ENCODE measurements at regions of chr2 and their contacts with region 1.

Region 1: DNA sequence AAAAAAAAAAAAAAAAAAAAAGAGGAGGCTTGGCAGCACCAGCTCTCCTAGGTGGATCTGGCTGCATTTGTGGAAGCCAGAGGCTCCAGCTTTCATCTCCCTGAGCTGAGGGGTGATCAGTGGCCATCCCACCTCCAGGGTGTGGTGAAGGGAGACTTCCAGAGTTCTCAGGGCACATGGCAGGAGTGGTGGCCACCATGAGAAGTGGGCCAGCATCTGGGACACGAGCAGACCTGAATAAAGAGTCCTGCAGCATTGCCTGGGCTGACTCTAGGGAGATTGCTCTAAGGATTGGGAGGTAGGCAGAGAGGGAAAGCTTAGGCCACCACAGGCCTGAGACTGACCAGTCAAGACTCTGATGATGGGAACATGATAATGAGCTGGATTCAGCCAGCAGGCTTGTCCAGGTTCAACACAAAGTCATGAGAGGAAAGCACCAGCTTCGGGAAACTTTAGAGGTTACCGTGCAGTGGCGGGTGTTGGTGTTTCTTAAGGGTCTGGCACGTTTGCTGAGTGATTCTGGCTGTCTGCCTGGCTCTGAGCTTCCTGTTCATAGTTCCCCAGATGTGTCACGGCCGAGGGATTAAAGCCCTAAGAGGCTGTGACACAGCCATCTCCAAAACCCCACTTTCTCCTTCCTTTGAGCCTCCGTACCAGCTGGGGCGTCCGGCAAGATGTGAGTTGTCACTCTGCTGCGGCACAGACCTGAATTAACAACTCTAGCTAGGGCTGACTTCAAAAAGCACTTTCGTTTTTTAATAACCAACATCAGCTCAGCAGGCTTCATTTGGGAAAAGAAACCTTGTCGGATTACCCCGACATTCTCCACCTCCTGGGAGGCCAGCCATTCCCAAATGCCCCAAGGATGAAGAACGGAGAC is 38.3 kb upstream of the IL1R1 start:
- DNase-seq: peak in 4 of 5 donors; percentile 52 to 82 (median 64)
- ATAC-seq: peak; percentile 60 to 89 (median 83)
- H3K4me3 ChIP-seq: peak overlapping the region; percentile 5 to 60 (median 42)
- H3K27ac ChIP-seq: peak overlapping the region; percentile 11 to 74 (median 67)
- H3K4me1 ChIP-seq: peaks cover 0 to 21% (median 6%) of the 10 kb centered on the region in 12 donors
- H3K27me3 ChIP-seq: no peaks in the 10 kb centered on the region
- CTCF ChIP-seq: no peak
- POLR2A ChIP-seq: no peak

Region 2: DNA sequence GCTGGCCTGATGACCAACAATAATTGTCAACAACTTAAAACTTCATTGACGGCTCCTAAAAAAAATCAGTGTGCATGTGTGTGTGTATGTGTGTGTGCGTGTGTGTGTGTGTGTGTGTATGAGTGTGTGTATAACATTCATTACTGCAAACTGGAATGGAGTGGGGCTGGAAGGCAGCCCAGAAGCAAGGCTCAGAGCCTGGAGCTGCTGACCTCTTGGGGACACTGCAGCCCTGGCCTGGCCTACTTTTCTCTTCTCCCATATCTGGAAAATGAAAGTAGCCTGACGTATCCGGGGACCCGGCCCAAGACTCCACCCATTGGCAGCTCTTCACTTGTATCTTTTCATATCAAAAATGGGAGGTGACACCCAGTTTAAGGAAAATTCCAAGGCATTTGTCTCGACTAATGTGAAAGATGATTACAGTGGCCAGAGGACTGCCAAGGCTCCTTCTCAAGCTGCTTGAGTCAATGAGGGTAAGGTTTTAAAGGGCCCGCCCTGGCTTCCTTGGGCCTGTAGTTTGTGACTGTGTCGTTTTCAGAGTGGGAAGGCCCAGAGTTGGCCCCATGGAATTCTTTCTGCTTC is 34.1 kb before region 1 on chr2:
- intact Hi-C with region 1: loop called in 1 of 10 experiments (anchors 5 kb)
- DNase-seq: peak; percentile 90 to 95 (median 92)
- ATAC-seq: peak; percentile 94 to 98 (median 96)
- H3K4me3 ChIP-seq: peak overlapping the region in 8 of 12 donors; percentile 0 to 38 (median 18)
- H3K27ac ChIP-seq: peak overlapping the region; percentile 36 to 86 (median 74)
- H3K4me1 ChIP-seq: peaks cover 0 to 41% (median 26%) of the 10 kb centered on the region in 12 donors
- H3K27me3 ChIP-seq: no peaks in the 10 kb centered on the region
- CTCF ChIP-seq: peak in 6 of 12 donors; percentile 17 to 42 (median 34)
- POLR2A ChIP-seq: peak in 1 of 2 donors; percentile 22

Region 3: GRCh38 chr2:102166189-102166845 is 62.1 kb after region 1 on chr2:
- intact Hi-C with region 1: loop called in 1 of 10 experiments (anchors 10 kb)
- DNase-seq: no peak
- ATAC-seq: peak; percentile 47 to 91 (median 81)
- H3K4me3 ChIP-seq: no peak overlapping the region
- H3K27ac ChIP-seq: no peak overlapping the region
- H3K4me1 ChIP-seq: peaks cover 0 to 13% (median 4%) of the 10 kb centered on the region in 12 donors
- H3K27me3 ChIP-seq: no peaks in the 10 kb centered on the region
- CTCF ChIP-seq: peak; percentile 36 to 79 (median 66)
- POLR2A ChIP-seq: no peak

Measured in heart left ventricle (tissue), 16 donors.